Prostate gland (tissue), 2 donors: ENCODE measurements at regions of chr22 and their contacts with region 1.

Region 1: GRCh38 chr22:41237707-41238569 is 2.8 kb downstream of the CHADL start:
- DNase-seq: peak; percentile 75
- H3K4me3 ChIP-seq: peak overlapping the region; percentile 33 to 38
- H3K27ac ChIP-seq: peak overlapping the region; percentile 68 to 75
- H3K4me1 ChIP-seq: peaks cover 7% of the 10 kb centered on the region
- H3K27me3 ChIP-seq: no peaks in the 10 kb centered on the region
- CTCF ChIP-seq: peak; percentile 24 to 86 (median 56)
- POLR2A ChIP-seq: no peak

Region 2: DNA sequence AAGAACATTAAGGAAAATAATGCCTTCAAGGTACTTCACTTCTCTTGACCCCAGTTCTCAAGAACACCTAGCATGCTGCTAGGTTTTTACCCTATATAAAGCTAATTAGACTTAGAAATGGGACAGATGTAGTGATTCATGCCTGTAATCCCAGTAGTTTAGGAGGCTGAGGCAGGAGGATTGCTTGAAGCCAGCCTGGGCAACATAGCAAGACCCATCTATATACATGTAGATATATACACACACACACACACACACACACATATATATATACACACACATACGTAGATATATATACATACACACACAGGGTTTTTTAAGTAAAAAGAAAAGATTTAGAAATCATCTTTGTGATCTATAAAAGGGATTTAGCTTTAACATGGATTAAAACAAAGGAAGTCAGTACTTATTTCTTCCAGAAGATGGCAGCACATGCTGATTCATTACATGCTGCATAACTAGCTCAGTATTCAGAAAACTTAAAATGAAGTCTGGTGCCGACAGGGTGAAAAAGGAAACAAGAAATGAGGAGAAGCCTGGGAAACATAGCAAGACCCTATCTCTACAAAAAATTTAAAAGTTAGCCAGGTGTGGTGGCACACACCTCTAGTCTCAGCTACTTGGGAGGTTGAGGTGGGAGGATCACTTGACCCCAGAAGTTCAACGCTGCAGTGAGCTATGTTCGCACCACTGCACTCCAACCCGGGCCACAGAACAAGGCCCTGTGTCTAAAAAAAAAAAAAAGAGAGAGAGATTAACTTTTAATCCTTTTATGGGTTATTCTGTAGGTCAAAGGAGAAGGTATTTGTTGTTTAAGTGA is 315.2 kb before region 1 on chr22:
- intact Hi-C with region 1: loop called (anchors 5 kb)
- DNase-seq: peak; percentile 36
- H3K4me3 ChIP-seq: no peak overlapping the region
- H3K27ac ChIP-seq: no peak overlapping the region
- H3K4me1 ChIP-seq: no peaks in the 10 kb centered on the region
- H3K27me3 ChIP-seq: no peaks in the 10 kb centered on the region
- CTCF ChIP-seq: peak; percentile 28 to 87 (median 76)
- POLR2A ChIP-seq: no peak

Region 3: DNA sequence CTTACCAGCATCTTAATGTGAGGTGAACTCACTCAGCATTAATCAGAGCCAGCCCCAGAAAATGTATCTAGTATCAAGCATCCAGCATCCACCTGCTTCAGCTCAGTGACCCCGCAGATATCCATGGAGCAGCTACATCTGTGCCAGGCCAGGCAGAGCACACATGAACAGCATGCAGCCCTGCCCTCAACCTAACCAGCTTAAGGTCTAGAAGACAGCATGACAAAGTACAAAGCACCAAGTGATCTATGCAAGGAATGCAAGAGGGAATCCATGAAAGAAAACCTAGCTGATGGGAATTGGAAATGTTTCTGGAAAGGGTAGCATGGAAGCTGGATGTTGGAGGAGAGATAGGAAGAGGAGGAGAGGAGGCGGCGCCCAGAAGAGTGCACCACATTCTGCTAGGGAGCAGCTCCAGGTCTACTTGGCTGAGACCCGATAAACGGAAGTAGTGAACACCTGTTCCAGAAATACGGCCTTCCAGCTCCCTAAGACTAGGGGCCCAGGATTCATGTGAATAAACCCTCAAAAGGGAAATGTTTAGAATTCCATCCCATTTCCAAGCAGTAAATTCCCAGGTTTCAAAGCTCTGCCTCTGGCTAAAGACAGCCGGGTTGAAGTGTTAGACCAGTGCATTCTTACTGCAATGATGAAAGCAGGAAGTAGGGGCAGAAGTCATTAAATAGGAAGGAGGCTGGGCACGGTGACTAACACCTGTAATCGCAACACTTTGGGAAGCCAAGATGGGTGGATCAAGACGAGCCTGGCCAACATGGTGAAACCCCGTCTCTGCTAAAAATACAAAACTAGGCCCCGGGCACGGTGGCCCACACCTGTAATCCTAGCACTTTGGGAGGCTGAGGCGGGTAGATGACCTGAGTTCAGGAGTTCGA is 56.3 kb before region 1 on chr22:
- intact Hi-C with region 1: no loop called
- DNase-seq: no peak
- H3K4me3 ChIP-seq: no peak overlapping the region
- H3K27ac ChIP-seq: no peak overlapping the region
- H3K4me1 ChIP-seq: no peaks in the 10 kb centered on the region
- H3K27me3 ChIP-seq: no peaks in the 10 kb centered on the region
- CTCF ChIP-seq: no peak
- POLR2A ChIP-seq: no peak